ENCODE measurements at regions of chr19 and their contacts with region 1.

Region 1: DNA sequence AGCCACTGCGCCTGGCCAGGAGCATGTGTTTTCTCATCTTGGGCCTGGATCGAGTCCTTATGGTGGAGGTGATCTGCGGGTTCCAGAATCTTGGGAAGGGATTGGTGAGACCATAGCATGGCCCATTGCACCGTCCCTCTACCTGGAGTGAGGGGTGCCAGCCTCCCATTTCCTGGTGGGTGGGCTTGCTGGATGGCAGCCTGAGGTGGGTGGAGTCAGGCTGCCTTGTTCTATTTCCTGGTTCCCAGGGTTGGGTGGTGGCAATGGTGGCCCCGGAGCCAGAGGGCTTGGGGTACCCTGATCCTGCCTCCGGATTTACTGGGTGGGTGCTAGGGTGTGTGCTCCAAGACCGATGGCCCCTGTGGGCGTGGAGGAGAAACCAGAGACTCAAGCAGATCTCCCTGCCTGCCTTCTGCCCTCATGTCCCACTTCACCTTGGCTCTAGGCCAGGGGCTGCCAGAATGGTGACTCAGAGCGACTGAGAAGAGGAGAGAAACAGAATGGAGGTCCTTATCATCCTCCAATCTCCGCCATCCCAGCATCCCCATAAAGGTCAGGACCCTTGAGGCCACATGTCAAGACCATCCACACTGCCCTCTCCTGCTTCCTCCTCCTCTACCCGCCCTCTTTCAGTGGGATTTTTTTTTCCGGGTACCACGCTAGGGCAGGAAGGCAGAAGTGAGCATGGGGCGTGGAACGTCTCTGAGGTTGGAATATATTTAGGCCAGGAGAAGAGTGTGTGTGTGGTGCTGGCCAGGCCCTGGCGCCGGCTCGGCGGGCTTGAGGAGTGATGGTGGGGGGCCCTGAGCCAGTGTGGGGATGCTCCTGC is 22.1 kb downstream of the IER2 start:
- DNase-seq: peak; percentile 90
- H3K4me3 Mint-ChIP-seq: peak overlapping the region; percentile 83
- H3K27ac Mint-ChIP-seq: peak overlapping the region; percentile 99
- H3K4me1 Mint-ChIP-seq: peaks cover 55% of the 10 kb centered on the region
- H3K27me3 Mint-ChIP-seq: no peaks in the 10 kb centered on the region

Region 2: DNA sequence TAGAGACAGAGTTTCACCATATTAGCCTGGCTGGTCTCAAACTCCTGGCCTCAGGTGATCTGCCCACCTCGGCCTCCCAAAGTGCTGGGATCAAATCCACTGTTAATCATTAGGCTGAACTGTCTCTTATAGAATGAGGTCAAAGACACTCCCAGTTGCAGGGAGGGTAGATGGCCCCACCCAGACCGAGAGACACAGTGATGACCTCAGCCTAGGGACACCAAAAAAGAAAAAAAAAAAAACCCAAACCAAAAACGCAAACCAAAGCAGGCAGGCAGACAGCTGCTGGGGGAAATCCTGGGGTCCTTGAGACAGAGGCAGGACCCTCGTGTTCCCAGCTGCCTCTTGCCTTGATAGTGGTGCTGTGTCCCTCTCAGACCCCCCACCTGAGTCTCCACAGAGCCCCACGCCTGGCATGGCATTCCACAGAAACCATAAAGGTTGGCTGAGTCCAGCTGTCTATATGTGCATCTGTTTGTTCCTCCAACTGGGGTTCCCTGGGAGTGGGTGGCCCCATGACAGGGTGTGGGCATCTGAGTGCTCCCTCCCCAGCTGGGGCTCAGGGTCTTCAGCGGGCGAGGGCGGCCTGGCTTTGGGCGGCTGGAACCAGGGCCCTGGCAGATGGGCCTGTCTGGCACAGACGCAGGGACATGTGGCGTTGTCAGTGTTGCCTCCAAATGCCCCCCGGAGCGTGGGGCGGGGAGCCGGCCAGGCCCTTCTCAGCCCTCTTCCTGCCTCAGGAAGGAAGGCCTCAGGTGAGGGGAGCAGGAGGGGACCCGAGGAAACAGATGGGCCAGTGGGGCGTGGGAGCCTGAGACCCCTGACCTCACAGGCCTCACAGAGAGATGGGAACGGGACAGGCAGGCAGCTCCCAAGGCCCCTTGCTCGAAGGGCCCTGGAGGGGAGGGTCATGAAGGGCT is 197.7 kb before region 1 on chr19:
- CTCF ChIA-PET with region 1: no interaction called
- POLR2A ChIA-PET with region 1: no interaction called
- intact Hi-C with region 1: no loop called
- DNase-seq: no peak
- H3K4me3 Mint-ChIP-seq: no peak overlapping the region
- H3K27ac Mint-ChIP-seq: no peak overlapping the region
- H3K4me1 Mint-ChIP-seq: peaks cover 9% of the 10 kb centered on the region
- H3K27me3 Mint-ChIP-seq: peaks cover 8% of the 10 kb centered on the region

Region 3: DNA sequence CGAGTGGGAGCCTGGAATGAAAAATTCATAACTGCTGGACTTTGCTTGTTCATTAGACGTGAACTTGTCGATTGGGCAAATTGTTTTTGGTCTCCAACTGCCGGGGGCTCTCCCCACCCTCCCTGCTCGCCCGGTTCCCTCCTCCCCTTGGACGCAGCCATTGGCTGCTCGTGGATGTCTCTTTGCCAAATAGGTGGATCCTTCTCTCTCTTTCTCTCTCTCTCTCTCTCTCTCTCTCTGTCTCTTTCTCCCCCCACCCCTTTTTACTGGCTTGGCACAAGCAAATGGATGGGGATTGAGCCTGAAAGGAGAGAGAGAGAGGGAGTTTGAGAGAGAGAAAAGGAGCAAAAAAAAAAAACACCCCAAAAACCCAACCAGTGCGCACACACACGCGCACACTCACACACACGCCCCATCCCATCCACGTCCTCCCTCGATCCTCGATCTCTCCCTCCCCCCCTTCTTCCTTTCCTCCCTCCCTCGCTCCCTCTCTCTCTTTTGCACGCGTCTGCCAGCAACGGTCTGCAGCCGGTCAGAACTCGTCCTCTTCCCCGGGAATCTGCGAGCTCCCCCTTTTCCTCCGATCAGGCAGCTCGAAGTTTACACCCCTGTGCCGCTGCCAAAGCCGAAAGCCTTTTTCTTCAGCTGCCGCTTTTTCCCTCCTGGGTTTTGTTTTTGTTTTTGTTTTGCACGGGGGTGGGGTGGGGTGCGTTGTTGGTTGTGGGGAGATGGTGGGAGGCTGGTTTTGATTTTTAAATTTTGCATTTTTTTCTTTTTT is 149.2 kb before region 1 on chr19:
- CTCF ChIA-PET with region 1: no interaction called
- POLR2A ChIA-PET with region 1: no interaction called
- intact Hi-C with region 1: no loop called
- DNase-seq: no peak
- H3K4me3 Mint-ChIP-seq: peak overlapping the region; percentile 58
- H3K27ac Mint-ChIP-seq: no peak overlapping the region
- H3K4me1 Mint-ChIP-seq: peaks cover 18% of the 10 kb centered on the region
- H3K27me3 Mint-ChIP-seq: peaks cover 20% of the 10 kb centered on the region

Region 4: DNA sequence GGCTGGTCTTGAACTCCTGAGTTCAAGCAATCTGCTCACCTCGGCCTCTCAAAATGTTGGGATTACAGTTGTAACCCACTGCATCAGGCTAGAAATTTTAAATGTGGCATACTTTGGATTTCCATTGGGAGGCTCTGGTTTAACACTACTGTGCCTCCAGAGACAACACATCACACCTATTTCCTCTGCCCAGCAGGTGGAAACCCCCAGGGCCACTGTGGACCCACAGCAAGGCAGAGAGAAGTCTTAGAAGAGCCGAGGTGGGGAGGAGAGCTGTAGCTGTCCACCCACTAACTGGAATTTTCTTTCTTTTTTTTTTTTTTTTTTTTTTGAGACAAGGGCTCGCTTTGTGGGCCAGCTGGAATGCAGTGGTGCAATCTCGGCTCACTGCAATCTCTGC is 17.3 kb after region 1 on chr19:
- CTCF ChIA-PET with region 1: interaction called, 13 read pairs
- POLR2A ChIA-PET with region 1: no interaction called
- intact Hi-C with region 1: loop called (anchors 2 kb)
- DNase-seq: no peak
- H3K4me3 Mint-ChIP-seq: no peak overlapping the region
- H3K27ac Mint-ChIP-seq: no peak overlapping the region
- H3K4me1 Mint-ChIP-seq: peaks cover 29% of the 10 kb centered on the region
- H3K27me3 Mint-ChIP-seq: no peaks in the 10 kb centered on the region